HCT116 (cell line): ENCODE measurements at regions of chr10 and their contacts with region 1.

Region 1: DNA sequence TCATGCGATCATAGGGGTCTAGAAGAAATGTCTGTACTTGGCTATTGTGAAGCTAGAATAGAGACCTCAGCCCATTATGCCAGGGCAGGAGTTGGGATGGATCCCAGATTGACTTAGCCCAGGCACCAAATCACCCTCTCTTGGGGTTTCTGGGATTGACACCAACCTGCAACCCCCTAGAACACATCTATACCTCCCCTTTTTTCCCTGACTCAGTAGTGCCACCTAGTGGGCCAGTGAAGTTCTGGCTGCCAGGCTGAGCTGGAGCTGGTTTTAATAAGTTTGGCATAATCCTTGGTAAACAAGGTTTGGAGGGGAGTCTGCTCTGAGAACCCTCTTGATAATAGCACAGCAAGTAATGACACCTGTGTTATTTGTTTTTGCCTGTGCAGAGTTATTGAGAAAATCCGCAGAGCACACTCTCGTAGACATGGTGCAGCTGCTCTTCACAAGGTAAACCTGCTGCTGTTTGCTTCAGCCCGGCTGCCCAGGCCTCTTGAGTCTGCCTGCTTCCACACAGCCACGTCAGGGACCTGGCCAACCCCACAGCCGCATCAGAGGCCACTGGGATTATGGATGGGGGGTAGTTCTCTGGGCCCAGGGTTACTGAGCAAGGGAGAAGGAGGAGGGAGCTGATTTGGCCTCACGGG is 43.3 kb upstream of the NFKB2 start:
- DNase-seq: peak; percentile 53
- ATAC-seq: peak; percentile 81
- H3K4me3 ChIP-seq: no peak overlapping the region
- H3K27ac ChIP-seq: no peak overlapping the region
- H3K4me1 ChIP-seq: peaks cover 0 to 4% of the 10 kb centered on the region in 2 experiments; a peak in 2 of 4 replicates
- H3K27me3 ChIP-seq: no peaks in the 10 kb centered on the region
- CTCF ChIP-seq: peak; percentile 93 to 100 (median 100)
- POLR2A ChIP-seq: no peak
- RAD21 ChIP-seq: peak; percentile 87

Region 2: DNA sequence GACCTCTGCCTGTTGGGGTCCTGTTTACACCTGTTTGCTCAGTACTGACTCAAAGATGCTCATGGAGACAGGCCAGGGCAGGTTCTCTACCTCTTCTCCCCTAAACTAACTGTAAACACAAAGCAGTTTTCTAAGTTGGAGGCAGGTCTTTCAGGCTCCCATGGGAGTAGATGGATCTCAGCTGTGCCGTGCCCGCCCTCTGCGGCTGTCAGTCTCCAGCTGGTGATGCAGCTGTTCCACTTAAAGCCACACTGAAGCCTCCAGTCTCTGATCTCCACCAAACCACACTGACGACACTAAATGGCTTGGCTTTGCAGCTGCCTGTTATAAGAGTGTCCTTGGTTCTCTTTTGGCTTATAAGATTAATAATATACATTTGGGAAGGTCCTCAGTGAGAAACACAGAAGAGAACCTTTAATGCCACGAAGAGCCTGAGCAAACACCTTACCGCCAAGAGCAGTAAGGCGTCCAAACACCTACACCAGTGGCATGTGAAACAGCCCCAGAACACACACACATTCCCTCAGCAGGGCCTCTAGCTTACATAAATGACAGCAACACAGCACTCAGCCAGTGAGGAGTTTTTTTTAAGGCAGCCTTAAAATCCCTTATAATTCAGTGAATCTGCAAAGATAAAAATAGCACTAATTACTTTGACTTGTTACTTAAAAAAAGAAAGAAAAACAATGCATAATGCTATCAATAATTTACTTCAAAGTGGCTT is 448.2 kb before region 1 on chr10:
- CTCF ChIA-PET with region 1: no interaction called
- POLR2A ChIA-PET with region 1: no interaction called
- RAD21 ChIA-PET with region 1: no interaction called
- intact Hi-C with region 1: no loop called
- DNase-seq: no peak
- ATAC-seq: no peak
- H3K4me3 ChIP-seq: no peak overlapping the region
- H3K27ac ChIP-seq: no peak overlapping the region
- H3K4me1 ChIP-seq: no peaks in the 10 kb centered on the region
- H3K27me3 ChIP-seq: no peaks in the 10 kb centered on the region
- CTCF ChIP-seq: no peak
- POLR2A ChIP-seq: no peak
- RAD21 ChIP-seq: no peak

Region 3: GRCh38 chr10:102167861-102168260 is 184.3 kb before region 1 on chr10:
- CTCF ChIA-PET with region 1: interaction called, 38 read pairs
- POLR2A ChIA-PET with region 1: interaction called, 5 read pairs
- RAD21 ChIA-PET with region 1: interaction called, 8 read pairs
- intact Hi-C with region 1: loop called (anchors 1 kb)
- DNase-seq: no peak
- ATAC-seq: no peak
- H3K4me3 ChIP-seq: no peak overlapping the region
- H3K27ac ChIP-seq: no peak overlapping the region
- H3K4me1 ChIP-seq: peaks cover 4 to 6% of the 10 kb centered on the region in 2 experiments; a peak in 2 of 4 replicates
- H3K27me3 ChIP-seq: no peaks in the 10 kb centered on the region
- CTCF ChIP-seq: no peak
- POLR2A ChIP-seq: no peak
- RAD21 ChIP-seq: no peak

Region 4: DNA sequence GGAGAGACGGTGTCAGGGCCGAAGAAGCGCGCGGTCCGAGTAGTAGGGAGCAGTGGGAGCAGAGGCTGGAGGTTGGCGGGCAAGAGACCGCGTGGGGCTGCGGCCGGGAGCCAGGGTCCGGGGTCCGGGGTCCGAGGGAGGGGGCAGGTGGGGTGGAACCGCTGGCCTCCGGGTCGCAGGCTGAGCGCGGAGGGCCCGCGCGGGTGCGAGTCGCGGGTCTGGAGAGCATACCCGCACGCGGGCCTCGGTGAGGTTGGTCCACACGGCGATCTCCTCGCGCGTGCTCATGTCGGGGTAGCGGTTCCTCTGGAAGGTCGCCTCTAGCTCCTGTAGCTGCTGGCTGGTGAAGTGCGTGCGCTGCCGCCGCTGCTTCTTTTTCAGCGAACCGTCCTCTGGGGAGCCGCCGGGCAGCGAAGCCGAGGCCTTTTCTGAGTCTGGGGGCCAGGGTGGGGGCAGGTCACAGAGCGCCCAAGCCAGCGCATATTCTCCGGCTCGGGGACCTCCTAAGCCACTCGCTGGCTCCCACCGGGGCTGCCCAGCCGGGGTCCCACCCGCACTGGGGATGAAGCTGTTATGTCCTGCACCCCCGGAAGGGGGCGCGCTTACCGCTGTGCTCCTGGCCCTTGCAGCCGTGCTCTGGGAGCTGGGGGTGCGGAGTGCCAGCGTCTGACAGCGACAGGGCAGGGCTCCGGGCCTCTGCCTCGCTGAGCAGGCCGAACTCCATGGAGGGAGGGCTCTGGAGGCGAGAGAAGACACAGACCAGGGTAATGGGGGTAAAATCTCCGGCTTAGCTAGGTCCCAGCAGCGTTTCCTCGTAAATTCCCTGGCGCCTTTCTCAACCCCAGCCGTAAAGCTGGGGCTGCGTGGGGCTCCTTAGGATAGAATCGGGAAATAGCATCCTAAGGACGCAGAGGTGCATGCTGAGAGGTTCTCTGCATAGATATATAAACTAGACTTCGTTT is 120.6 kb before region 1 on chr10:
- CTCF ChIA-PET with region 1: interaction called, 625 read pairs
- POLR2A ChIA-PET with region 1: interaction called, 28 read pairs
- RAD21 ChIA-PET with region 1: interaction called, 50 to 57 read pairs
- intact Hi-C with region 1: loop called (anchors 1 kb)
- DNase-seq: peak; percentile 40
- ATAC-seq: peak; percentile 69
- H3K4me3 ChIP-seq: peak overlapping the region; percentile 63 to 82
- H3K27ac ChIP-seq: peak overlapping the region; percentile 75
- H3K4me1 ChIP-seq: peaks cover 9 to 39% of the 10 kb centered on the region in 2 experiments
- H3K27me3 ChIP-seq: no peaks in the 10 kb centered on the region
- CTCF ChIP-seq: peak in 2 of 3 experiments; percentile 99; a peak in 4 of 6 replicates
- POLR2A ChIP-seq: no peak
- RAD21 ChIP-seq: no peak

Region 5: GRCh38 chr10:102245101-102245931 is 106.9 kb before region 1 on chr10 and contains the start of gene GBF1:
- CTCF ChIA-PET with region 1: interaction called, 11 read pairs
- POLR2A ChIA-PET with region 1: interaction called, 6 read pairs
- RAD21 ChIA-PET with region 1: no interaction called
- intact Hi-C with region 1: no loop called
- DNase-seq: peak; percentile 100
- ATAC-seq: peak; percentile 88
- H3K4me3 ChIP-seq: peak within 1 kb of the TSS; percentile 91 to 95
- H3K27ac ChIP-seq: peak within 1 kb of the TSS; percentile 61
- H3K4me1 ChIP-seq: peaks cover 24 to 54% of the 10 kb centered on the region in 2 experiments
- H3K27me3 ChIP-seq: no peaks in the 10 kb centered on the region
- CTCF ChIP-seq: no peak
- POLR2A ChIP-seq: peak; percentile 87
- RAD21 ChIP-seq: no peak
- total RNA-seq, gene GBF1: 58.9 TPM

Region 6: DNA sequence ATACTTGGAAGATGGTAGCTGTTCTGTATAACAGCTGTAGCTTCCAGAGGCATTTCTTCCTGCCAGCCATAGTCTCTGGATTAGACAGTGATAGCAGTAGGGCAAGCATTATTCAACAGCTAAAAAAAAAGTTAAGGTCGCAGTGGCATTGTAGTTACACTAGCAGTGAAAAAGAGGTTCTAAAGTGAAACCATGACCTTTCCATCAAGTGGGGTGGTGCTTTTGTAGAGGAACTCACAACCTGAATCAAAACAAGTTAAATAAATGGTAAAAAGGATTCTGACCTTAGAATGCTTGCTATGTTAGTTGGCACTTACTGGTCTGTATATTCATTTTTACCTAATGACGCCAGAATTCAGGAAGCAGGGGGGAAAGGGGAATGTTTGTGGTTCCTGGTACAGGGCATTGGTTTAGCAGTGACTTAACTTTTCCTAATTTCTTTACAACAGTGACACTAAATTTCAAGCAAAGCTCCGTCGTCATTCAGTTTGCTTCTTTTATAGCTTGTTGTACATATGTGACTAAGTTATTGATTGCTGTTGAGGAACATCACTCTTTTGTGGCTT is 51.8 kb before region 1 on chr10:
- CTCF ChIA-PET with region 1: no interaction called
- POLR2A ChIA-PET with region 1: no interaction called
- RAD21 ChIA-PET with region 1: no interaction called
- intact Hi-C with region 1: no loop called
- DNase-seq: no peak
- ATAC-seq: no peak
- H3K4me3 ChIP-seq: no peak overlapping the region
- H3K27ac ChIP-seq: no peak overlapping the region
- H3K4me1 ChIP-seq: peaks cover 0 to 4% of the 10 kb centered on the region in 2 experiments; a peak in 1 of 4 replicates
- H3K27me3 ChIP-seq: no peaks in the 10 kb centered on the region
- CTCF ChIP-seq: no peak
- POLR2A ChIP-seq: no peak
- RAD21 ChIP-seq: no peak

Region 7: DNA sequence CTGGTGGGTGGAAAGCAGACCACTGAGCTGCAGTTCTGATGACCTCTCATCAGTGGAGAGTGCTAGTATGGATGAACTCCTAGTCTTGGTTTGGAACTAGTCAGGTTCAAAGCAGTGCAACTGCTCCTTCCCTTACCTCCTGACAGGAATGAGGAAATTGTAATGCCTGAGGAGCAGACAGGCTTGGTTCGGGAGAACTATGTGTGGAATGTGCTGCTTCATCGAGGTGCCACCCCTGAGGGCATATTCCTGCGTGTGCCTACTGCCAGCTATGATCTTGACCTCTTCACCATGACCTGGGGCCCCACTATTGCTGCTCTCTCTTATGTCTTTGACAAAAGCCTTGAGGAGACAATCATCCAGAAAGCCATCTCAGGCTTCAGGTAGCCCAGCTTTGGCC is 15.9 kb after region 1 on chr10:
- CTCF ChIA-PET with region 1: interaction called, 22 read pairs
- POLR2A ChIA-PET with region 1: interaction called, 3 read pairs
- RAD21 ChIA-PET with region 1: interaction called in 1 of 2 experiments, 3 read pairs
- intact Hi-C with region 1: no loop called
- DNase-seq: no peak
- ATAC-seq: peak; percentile 71; the same call in 1 of the 2 replicates
- H3K4me3 ChIP-seq: no peak overlapping the region
- H3K27ac ChIP-seq: peak overlapping the region; percentile 31; the same call in 1 of the 2 replicates
- H3K4me1 ChIP-seq: peaks cover 8 to 19% of the 10 kb centered on the region in 2 experiments; a peak in 3 of 4 replicates
- H3K27me3 ChIP-seq: no peaks in the 10 kb centered on the region
- CTCF ChIP-seq: no peak
- POLR2A ChIP-seq: no peak
- RAD21 ChIP-seq: no peak